PC-9 (cell line): ENCODE measurements at regions of chr11 and their contacts with region 1.

Region 1: GRCh38 chr11:69704508-69705253 is 859 bp upstream of the FGF19 start:
- DNase-seq: peak in 1 of 2 experiments; percentile 60
- H3K4me3 ChIP-seq: peak overlapping the region; percentile 61
- H3K27ac ChIP-seq: no peak overlapping the region
- H3K4me1 ChIP-seq: peaks cover 21% of the 10 kb centered on the region
- H3K27me3 ChIP-seq: no peaks in the 10 kb centered on the region
- CTCF ChIP-seq: peak; percentile 82

Region 2: GRCh38 chr11:69040581-69041260 is 664.0 kb before region 1 on chr11:
- CTCF ChIA-PET with region 1: interaction called, 11 read pairs
- POLR2A ChIA-PET with region 1: no interaction called
- intact Hi-C with region 1: no loop called
- DNase-seq: no peak
- H3K4me3 ChIP-seq: no peak overlapping the region
- H3K27ac ChIP-seq: no peak overlapping the region
- H3K4me1 ChIP-seq: 0 out of 2 replicates have a peak, but pooled peaks cover 5% of the 10 kb centered on the region
- H3K27me3 ChIP-seq: peaks cover 10% of the 10 kb centered on the region; the same call in 1 of the 2 replicates
- CTCF ChIP-seq: no peak

Region 3: GRCh38 chr11:69718147-69718546 is 13.5 kb after region 1 on chr11:
- CTCF ChIA-PET with region 1: interaction called, 11 read pairs
- POLR2A ChIA-PET with region 1: no interaction called
- intact Hi-C with region 1: no loop called
- DNase-seq: peak; percentile 47 to 61
- H3K4me3 ChIP-seq: no peak overlapping the region
- H3K27ac ChIP-seq: no peak overlapping the region
- H3K4me1 ChIP-seq: no peaks in the 10 kb centered on the region
- H3K27me3 ChIP-seq: no peaks in the 10 kb centered on the region
- CTCF ChIP-seq: peak; percentile 83

Region 4: DNA sequence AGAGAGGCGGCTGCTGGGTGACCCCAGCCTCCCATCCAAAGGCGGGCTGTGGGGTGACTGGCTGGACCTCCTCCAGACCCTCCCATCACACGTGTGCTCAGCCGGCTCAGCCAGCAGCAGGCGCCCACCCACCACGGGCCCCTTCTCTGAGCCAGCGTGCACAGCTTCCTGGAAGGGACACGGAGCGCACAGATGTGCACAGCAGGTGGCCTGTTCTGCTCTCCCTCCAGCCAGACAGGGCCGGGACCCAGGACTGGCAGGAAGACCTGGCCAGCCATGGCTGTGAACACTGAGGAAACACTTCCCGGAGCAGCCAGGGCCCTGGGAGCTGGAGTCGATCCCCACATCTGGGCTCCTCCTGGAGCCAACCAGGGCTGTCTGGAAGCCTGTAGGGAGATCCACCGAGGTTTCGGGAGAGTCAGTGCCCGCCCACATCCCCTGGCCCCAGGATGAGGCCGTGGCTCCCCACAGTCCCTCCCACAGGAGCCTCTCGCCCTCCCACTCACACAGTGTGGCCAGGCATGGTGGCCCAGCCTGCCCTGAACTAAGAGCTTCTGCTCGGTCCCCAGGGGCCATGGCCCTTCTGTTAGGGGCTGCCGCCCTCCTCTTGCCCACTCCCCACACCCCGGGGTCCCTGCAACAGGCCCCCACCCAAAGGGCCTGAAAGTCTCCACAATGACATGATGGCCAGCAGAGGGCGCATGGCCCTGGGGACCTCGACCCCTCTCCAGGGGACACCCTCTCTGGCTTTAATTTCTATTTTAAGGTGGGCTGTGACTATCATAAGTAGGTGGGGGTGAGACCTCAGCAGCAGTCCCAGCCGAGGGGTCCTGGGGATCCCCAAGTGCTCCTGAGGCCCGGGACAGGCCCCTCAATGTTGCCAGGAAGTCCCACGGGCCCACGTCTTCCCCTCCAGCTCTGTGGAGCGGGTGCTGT is 205.1 kb after region 1 on chr11:
- CTCF ChIA-PET with region 1: interaction called, 6 read pairs
- POLR2A ChIA-PET with region 1: no interaction called
- intact Hi-C with region 1: loop called (anchors 5 kb)
- DNase-seq: peak in 1 of 2 experiments; percentile 21
- H3K4me3 ChIP-seq: no peak overlapping the region
- H3K27ac ChIP-seq: no peak overlapping the region
- H3K4me1 ChIP-seq: peaks cover 98% of the 10 kb centered on the region
- H3K27me3 ChIP-seq: no peaks in the 10 kb centered on the region
- CTCF ChIP-seq: peak; percentile 86

Region 5: GRCh38 chr11:70467201-70468085 is 762.8 kb after region 1 on chr11:
- CTCF ChIA-PET with region 1: interaction called, 20 read pairs
- POLR2A ChIA-PET with region 1: no interaction called
- intact Hi-C with region 1: no loop called
- DNase-seq: peak in 1 of 2 experiments; percentile 70
- H3K4me3 ChIP-seq: no peak overlapping the region
- H3K27ac ChIP-seq: no peak overlapping the region
- H3K4me1 ChIP-seq: no peaks in the 10 kb centered on the region
- H3K27me3 ChIP-seq: no peaks in the 10 kb centered on the region
- CTCF ChIP-seq: peak; percentile 99